ENCODE measurements at regions of chr15 and their contacts with region 1.

Region 1: DNA sequence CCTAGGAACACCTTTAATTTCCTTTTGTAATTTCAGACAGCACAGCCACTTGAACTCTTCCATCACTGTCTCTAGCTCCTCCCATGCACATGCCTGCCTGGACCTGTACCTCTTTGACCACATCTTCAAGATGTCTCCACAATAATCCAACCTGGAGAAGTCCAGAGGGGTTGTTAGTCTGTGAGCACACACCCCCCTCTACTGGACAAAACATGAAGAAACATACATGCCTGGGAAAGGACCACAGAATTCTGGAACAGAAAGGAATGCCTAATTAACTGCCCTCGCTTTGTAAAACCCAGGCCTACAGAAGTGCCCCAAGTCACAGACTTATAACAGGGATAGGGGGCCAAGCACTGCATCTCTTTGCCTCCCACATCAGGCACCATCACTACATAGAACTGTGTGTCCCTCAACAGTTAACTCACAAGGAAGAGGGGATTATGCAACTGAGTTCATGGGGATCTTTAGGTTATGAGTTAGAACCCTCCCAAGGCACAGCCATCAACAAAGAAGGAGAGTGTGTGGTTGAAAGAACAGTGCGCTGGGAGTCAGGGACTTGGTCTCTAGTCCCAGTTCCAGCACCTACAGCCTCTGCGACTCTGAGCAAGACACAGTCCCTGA is 61.7 kb downstream of the FMN1 start:
- DNase-seq: peak; percentile 37 to 48
- H3K4me3 ChIP-seq: no peak overlapping the region
- H3K27ac ChIP-seq: no peak overlapping the region
- H3K4me1 ChIP-seq: peaks cover 12% of the 10 kb centered on the region
- H3K27me3 ChIP-seq: no peaks in the 10 kb centered on the region
- CTCF ChIP-seq: peak; percentile 61

Region 2: DNA sequence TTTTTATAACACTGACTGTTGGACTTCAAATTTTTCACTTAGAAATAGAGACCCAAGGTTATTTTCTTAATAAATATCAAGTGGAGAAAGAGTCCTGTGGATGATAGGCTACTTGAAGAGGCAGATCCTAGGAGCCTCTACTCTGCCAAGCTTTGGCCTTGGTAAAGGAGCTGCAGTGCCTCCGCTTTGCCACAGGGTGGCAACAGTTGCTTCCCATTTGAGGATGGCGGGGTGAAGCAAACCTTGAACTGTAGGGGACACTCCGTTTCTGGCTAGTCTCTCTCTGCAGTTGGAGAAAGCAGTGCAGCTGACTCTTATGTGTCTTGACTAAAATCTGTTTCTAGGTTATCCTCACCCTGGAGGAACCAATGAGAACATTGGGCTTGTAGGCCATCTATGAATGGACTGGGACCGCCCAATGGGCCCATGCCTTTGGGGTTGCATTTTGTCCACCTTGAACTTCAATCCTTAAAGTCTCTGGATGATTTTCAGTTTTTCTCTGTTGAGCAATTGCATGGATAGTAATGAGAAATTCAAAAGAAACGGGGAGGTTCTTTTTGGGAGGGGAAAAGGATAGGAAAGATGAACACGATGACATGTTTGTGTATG is 481.5 kb before region 1 on chr15:
- CTCF ChIA-PET with region 1: interaction called, 5 read pairs
- POLR2A ChIA-PET with region 1: interaction called, 3 read pairs
- intact Hi-C with region 1: loop called (anchors 1 kb)
- DNase-seq: peak in 1 of 2 experiments; percentile 68
- H3K4me3 ChIP-seq: no peak overlapping the region
- H3K27ac ChIP-seq: peak overlapping the region; percentile 84
- H3K4me1 ChIP-seq: peaks cover 19% of the 10 kb centered on the region
- H3K27me3 ChIP-seq: no peaks in the 10 kb centered on the region
- CTCF ChIP-seq: peak; percentile 92

Region 3: GRCh38 chr15:32994810-32995424 is 137.9 kb before region 1 on chr15:
- CTCF ChIA-PET with region 1: no interaction called
- POLR2A ChIA-PET with region 1: no interaction called
- intact Hi-C with region 1: loop called (anchors 10 kb)
- DNase-seq: no peak
- H3K4me3 ChIP-seq: no peak overlapping the region
- H3K27ac ChIP-seq: no peak overlapping the region
- H3K4me1 ChIP-seq: no peaks in the 10 kb centered on the region
- H3K27me3 ChIP-seq: no peaks in the 10 kb centered on the region
- CTCF ChIP-seq: peak; percentile 75

Region 4: GRCh38 chr15:33086507-33087121 is 46.2 kb before region 1 on chr15:
- CTCF ChIA-PET with region 1: interaction called, 27 read pairs
- POLR2A ChIA-PET with region 1: no interaction called
- intact Hi-C with region 1: loop called (anchors 1 kb)
- DNase-seq: peak in 1 of 2 experiments; percentile 51
- H3K4me3 ChIP-seq: no peak overlapping the region
- H3K27ac ChIP-seq: no peak overlapping the region
- H3K4me1 ChIP-seq: peaks cover 42% of the 10 kb centered on the region
- H3K27me3 ChIP-seq: no peaks in the 10 kb centered on the region
- CTCF ChIP-seq: peak; percentile 64

Region 5: DNA sequence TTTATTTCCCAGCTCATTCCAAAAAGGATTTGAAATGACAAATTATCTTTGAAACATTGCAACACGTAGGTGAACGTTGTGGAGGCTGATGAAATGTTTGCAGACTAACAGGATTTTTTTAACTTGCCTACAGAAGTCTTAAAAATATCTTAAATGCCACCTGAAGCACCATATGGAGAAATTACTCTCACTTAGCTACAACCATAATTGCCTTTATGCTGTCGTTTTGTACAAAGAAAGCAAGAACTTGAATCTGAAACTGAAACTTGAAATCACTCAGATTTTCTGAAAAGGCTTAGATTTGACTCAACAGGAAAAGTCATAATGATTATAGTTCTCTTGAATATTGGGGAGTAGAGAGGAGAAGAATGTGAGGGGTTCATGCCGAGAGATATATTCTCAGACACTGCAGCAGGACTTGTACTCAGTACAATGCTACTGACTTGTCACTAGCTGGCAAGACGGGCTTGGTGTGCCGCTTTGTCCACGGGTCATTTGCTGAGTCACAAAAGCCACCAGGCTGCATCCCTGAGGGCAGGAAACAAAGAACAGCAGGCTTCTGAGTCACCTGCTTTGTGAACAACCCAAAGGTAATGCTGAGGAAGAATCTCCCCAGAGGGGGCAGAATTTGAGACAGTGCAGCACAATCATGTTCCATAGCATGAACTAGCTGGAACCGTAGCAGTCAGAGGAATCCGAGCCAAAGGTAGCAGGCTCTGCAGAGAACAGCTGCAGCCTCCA is 68.8 kb after region 1 on chr15:
- CTCF ChIA-PET with region 1: interaction called, 15 read pairs
- POLR2A ChIA-PET with region 1: no interaction called
- intact Hi-C with region 1: loop called (anchors 10 kb)
- DNase-seq: peak; percentile 89 to 96
- H3K4me3 ChIP-seq: peak overlapping the region; percentile 53
- H3K27ac ChIP-seq: peak overlapping the region; percentile 99
- H3K4me1 ChIP-seq: peaks cover 41% of the 10 kb centered on the region
- H3K27me3 ChIP-seq: no peaks in the 10 kb centered on the region
- CTCF ChIP-seq: peak; percentile 58